ENCODE measurements at regions of chr3 and their contacts with region 1.

Region 1: DNA sequence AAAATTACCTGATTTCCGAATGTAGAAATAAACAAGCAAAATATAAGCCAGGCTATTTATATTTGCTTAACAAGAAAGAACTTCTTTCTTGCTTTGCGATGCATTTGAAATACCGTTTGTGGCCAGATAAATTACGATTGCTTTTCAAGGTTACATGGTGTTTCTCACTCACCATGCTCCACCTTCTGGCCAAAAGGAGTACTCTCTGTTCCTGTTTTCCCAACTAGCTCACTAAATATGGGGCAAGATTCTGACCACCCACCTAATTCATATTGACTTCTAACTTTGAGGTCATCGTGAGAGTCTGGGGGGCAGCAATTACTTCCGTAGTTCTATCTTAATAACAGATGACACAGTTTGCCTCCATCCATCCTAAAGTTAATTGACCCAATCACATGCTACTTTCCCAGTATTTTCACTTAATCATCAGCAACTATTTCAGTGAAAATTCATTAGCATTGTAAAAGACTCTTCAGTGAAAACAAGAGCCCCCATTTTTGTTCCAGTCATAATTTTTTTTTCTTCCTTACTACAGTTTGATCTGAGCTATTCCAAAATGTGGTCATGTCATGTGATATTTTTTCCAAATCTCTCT is 25.9 kb downstream of the ACP3 start:
- DNase-seq: peak; percentile 24
- CTCF ChIP-seq: peak; percentile 75

Region 2: DNA sequence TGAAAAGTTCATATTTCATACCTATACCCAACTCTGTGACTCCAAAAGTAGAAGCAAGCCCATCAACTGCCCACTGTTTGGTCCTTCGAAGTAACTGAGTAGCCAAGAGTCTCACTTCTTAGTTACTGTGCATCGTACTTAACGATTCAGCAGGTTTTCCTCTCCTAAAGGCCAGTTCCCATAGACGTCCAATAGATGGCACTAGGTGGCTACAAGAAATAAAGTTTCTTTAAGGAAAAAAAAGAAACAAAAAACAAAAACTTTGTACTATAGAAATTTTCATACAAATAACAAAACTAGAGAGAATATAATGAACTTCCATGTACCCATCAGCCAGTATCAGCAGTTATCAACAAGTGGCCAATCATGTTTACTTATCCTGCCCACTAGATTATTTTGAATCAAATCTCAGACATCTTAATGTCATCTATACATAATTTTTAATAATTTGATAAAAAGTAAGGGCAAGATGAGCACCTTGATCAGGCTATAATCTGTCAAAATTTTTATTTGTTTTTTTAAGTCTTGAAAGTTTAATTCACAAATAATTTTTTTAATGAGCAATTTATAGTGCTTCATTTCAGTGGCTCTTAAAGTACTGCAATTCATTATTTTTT is 89.7 kb before region 1 on chr3:
- in situ Hi-C with region 1: loop called (anchors 10 kb)
- DNase-seq: peak; percentile 36
- CTCF ChIP-seq: peak; percentile 73

Region 3: GRCh38 chr3:132283440-132283839 is 59.7 kb before region 1 on chr3:
- in situ Hi-C with region 1: no loop called
- DNase-seq: peak; percentile 28
- CTCF ChIP-seq: no peak

Region 4: GRCh38 chr3:132404276-132404675 is 61.2 kb after region 1 on chr3:
- in situ Hi-C with region 1: loop called (anchors 5 kb)
- DNase-seq: no peak
- CTCF ChIP-seq: no peak

Measured in GM13977 (cell line).